ENCODE measurements at regions of chr17 and their contacts with region 1.

Region 1: GRCh38 chr17:40086150-40087044 is 14.0 kb downstream of the NR1D1 start:
- DNase-seq: peak in 27 of 35 experiments; percentile 38 to 75 (median 57)
- ATAC-seq: peak; percentile 33 to 79 (median 60)
- H3K4me3 ChIP-seq: no peak overlapping the region
- H3K4me3 Mint-ChIP-seq: no peak overlapping the region
- H3K27ac ChIP-seq: no peak overlapping the region
- H3K27ac Mint-ChIP-seq: peak overlapping the region; percentile 15 to 72
- H3K4me1 ChIP-seq: peaks cover 0 to 12% of the 10 kb centered on the region in 2 experiments
- H3K4me1 Mint-ChIP-seq: peaks cover 15 to 17% (median 16%) of the 10 kb centered on the region in 3 donors
- H3K27me3 ChIP-seq: peaks cover 0 to 2% of the 10 kb centered on the region in 2 experiments
- H3K27me3 Mint-ChIP-seq: no peaks in the 10 kb centered on the region

Region 2: DNA sequence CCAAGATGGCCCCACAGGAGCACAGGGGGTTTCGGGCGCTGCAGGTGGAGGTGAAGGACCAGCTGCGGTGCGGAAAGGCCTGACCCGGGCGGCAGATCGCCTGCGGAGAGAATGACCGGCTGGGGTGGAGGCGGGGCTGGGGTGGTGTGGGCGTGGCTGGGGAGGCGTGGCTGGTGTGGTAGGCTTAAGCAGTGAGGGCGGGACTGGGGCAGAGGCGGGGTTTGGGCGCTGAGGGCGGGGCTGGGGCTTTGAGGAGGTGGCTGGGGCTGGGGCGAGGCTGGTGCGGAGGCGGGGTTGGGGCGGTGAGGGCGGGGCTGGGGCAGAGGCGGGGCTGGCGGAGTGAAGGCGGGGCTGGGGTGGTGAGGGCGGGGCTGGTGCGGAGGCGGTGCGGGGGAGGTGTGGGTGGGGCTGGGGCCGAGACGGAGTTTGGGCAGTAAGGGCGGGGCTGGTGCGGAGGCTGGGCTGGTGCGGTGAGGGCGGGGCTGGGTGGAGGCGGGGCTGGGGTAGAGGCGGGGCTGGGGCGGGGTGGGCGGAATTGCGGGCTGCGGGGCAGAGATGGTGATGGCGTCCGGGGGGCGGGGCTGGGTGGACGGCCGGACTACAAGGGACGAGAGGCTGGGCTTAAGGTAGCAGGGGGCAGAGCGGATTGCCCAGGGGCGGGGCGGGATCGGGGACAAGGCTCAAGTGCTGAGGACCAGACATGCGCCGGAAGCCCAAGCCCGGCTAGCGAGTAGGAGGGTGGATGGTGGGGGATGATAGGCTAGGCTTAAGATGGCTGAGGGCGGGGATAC is 133.5 kb before region 1 on chr17:
- CTCF ChIA-PET with region 1: no interaction called
- POLR2A ChIA-PET with region 1: no interaction called
- DNase-seq: peak; percentile 83 to 99 (median 95)
- ATAC-seq: peak; percentile 84 to 89 (median 86)
- H3K4me3 ChIP-seq: peak overlapping the region; percentile 56 to 64
- H3K4me3 Mint-ChIP-seq: peak overlapping the region; percentile 73 to 83 (median 80)
- H3K27ac ChIP-seq: peak overlapping the region; percentile 45
- H3K27ac Mint-ChIP-seq: peak overlapping the region; percentile 76 to 80
- H3K4me1 ChIP-seq: peaks cover 2 to 33% of the 10 kb centered on the region in 2 experiments
- H3K4me1 Mint-ChIP-seq: peaks cover 18 to 28% (median 23%) of the 10 kb centered on the region in 3 donors
- H3K27me3 ChIP-seq: no peaks in the 10 kb centered on the region
- H3K27me3 Mint-ChIP-seq: no peaks in the 10 kb centered on the region

Region 3: GRCh38 chr17:40068917-40069750 is 17.3 kb before region 1 on chr17:
- CTCF ChIA-PET with region 1: interaction called, 9 to 18 read pairs
- POLR2A ChIA-PET with region 1: interaction called in 1 of 2 experiments, 3 read pairs
- DNase-seq: peak; percentile 57 to 85 (median 73)
- ATAC-seq: peak; percentile 62 to 75 (median 65)
- H3K4me3 ChIP-seq: peak overlapping the region; percentile 42 to 49
- H3K4me3 Mint-ChIP-seq: peak overlapping the region; percentile 78 to 86 (median 81)
- H3K27ac ChIP-seq: peak overlapping the region; percentile 50
- H3K27ac Mint-ChIP-seq: peak overlapping the region; percentile 93 to 96
- H3K4me1 ChIP-seq: peaks cover 35 to 86% of the 10 kb centered on the region in 2 experiments
- H3K4me1 Mint-ChIP-seq: peaks cover 76 to 86% (median 81%) of the 10 kb centered on the region in 3 donors
- H3K27me3 ChIP-seq: no peaks in the 10 kb centered on the region
- H3K27me3 Mint-ChIP-seq: no peaks in the 10 kb centered on the region

Region 4: GRCh38 chr17:40075201-40075941 is 11.0 kb before region 1 on chr17:
- CTCF ChIA-PET with region 1: interaction called, 10 to 18 read pairs
- POLR2A ChIA-PET with region 1: no interaction called
- DNase-seq: peak in 31 of 35 experiments; percentile 32 to 82 (median 61)
- ATAC-seq: peak; percentile 72 to 85 (median 80)
- H3K4me3 ChIP-seq: no peak overlapping the region
- H3K4me3 Mint-ChIP-seq: peak overlapping the region in 2 of 3 donors; percentile 36 to 47
- H3K27ac ChIP-seq: no peak overlapping the region
- H3K27ac Mint-ChIP-seq: peak overlapping the region; percentile 71 to 74
- H3K4me1 ChIP-seq: peaks cover 18 to 46% of the 10 kb centered on the region in 2 experiments
- H3K4me1 Mint-ChIP-seq: peaks cover 36 to 54% (median 48%) of the 10 kb centered on the region in 3 donors
- H3K27me3 ChIP-seq: no peaks in the 10 kb centered on the region
- H3K27me3 Mint-ChIP-seq: no peaks in the 10 kb centered on the region

Region 5: GRCh38 chr17:40168262-40168832 is 82.0 kb after region 1 on chr17:
- CTCF ChIA-PET with region 1: interaction called, 8 to 13 read pairs
- POLR2A ChIA-PET with region 1: no interaction called
- DNase-seq: peak in 25 of 35 experiments; percentile 6 to 78 (median 31)
- ATAC-seq: peak; percentile 60 to 79 (median 72)
- H3K4me3 ChIP-seq: no peak overlapping the region
- H3K4me3 Mint-ChIP-seq: no peak overlapping the region
- H3K27ac ChIP-seq: peak overlapping the region; percentile 35
- H3K27ac Mint-ChIP-seq: peak overlapping the region; percentile 65 to 78
- H3K4me1 ChIP-seq: peaks cover 0 to 3% of the 10 kb centered on the region in 2 experiments
- H3K4me1 Mint-ChIP-seq: peaks cover 5 to 15% (median 13%) of the 10 kb centered on the region in 3 donors
- H3K27me3 ChIP-seq: no peaks in the 10 kb centered on the region
- H3K27me3 Mint-ChIP-seq: no peaks in the 10 kb centered on the region

Region 6: GRCh38 chr17:40598663-40599467 is 512.5 kb after region 1 on chr17:
- CTCF ChIA-PET with region 1: no interaction called
- POLR2A ChIA-PET with region 1: no interaction called
- DNase-seq: peak in 34 of 35 experiments; percentile 32 to 89 (median 72)
- ATAC-seq: peak; percentile 36 to 74 (median 42)
- H3K4me3 ChIP-seq: peak overlapping the region in 1 of 2 donors; percentile 11
- H3K4me3 Mint-ChIP-seq: peak overlapping the region; percentile 72 to 77 (median 73)
- H3K27ac ChIP-seq: peak overlapping the region; percentile 99
- H3K27ac Mint-ChIP-seq: peak overlapping the region; percentile 99 to 100
- H3K4me1 ChIP-seq: peaks cover 72 to 76% of the 10 kb centered on the region in 2 experiments
- H3K4me1 Mint-ChIP-seq: peaks cover 92 to 99% (median 99%) of the 10 kb centered on the region in 3 donors
- H3K27me3 ChIP-seq: no peaks in the 10 kb centered on the region
- H3K27me3 Mint-ChIP-seq: no peaks in the 10 kb centered on the region

Measured in T-cell (primary cell).